ENCODE measurements at regions of chr2 and their contacts with region 1.

Region 1: GRCh38 chr2:127664065-127664894 is 11.1 kb downstream of the LIMS2 start:
- DNase-seq: no peak
- H3K4me3 ChIP-seq: no peak overlapping the region
- H3K27ac ChIP-seq: no peak overlapping the region
- H3K4me1 ChIP-seq: no peaks in the 10 kb centered on the region
- H3K27me3 ChIP-seq: peaks cover 12% of the 10 kb centered on the region
- CTCF ChIP-seq: no peak

Region 2: DNA sequence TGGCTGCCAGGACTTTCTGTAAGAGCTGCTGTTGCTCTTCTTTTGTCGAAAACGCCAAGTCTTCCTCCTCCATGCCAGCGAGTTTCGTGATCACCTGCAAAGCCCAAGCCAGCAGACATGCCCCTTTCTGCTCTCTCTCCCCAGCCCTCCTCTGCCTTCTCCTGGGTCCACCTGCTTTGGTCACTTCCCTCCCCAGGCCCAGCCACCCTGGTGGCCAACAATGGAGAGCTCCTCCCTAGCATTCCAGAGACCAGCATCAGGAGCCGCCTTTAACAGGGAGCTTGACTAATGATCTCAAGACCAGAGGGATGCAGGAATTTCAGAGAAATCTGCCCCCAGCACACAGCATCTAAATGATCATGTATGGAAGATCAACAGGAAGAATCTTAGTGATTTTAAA is 404.9 kb before region 1 on chr2:
- CTCF ChIA-PET with region 1: interaction called, 11 read pairs
- POLR2A ChIA-PET with region 1: no interaction called
- intact Hi-C with region 1: no loop called
- DNase-seq: no peak
- H3K4me3 ChIP-seq: no peak overlapping the region
- H3K27ac ChIP-seq: no peak overlapping the region
- H3K4me1 ChIP-seq: no peaks in the 10 kb centered on the region
- H3K27me3 ChIP-seq: no peaks in the 10 kb centered on the region
- CTCF ChIP-seq: no peak

Region 3: DNA sequence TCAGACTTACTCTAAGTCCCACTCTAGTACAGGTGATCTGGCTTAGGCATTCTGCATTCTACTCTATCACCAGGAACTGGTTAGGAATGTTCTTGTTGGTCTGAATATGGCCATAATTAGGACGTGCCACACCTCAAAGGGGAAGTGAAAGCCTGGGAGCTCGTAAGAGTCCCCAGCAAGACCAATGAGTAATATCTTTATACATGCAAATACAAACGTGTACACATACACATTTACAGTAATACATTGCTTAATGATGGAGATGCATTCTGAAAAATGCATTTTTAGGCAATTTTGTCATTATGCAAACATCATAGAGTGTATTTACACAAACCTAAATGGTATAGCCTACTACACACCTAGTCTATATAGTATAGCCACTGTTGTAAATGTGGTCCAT is 350.9 kb before region 1 on chr2:
- CTCF ChIA-PET with region 1: no interaction called
- POLR2A ChIA-PET with region 1: no interaction called
- intact Hi-C with region 1: no loop called
- DNase-seq: no peak
- H3K4me3 ChIP-seq: no peak overlapping the region
- H3K27ac ChIP-seq: no peak overlapping the region
- H3K4me1 ChIP-seq: no peaks in the 10 kb centered on the region
- H3K27me3 ChIP-seq: no peaks in the 10 kb centered on the region
- CTCF ChIP-seq: no peak

Measured in A673 (cell line).